ENCODE measurements at regions of chr15 and their contacts with region 1.

Region 1: DNA sequence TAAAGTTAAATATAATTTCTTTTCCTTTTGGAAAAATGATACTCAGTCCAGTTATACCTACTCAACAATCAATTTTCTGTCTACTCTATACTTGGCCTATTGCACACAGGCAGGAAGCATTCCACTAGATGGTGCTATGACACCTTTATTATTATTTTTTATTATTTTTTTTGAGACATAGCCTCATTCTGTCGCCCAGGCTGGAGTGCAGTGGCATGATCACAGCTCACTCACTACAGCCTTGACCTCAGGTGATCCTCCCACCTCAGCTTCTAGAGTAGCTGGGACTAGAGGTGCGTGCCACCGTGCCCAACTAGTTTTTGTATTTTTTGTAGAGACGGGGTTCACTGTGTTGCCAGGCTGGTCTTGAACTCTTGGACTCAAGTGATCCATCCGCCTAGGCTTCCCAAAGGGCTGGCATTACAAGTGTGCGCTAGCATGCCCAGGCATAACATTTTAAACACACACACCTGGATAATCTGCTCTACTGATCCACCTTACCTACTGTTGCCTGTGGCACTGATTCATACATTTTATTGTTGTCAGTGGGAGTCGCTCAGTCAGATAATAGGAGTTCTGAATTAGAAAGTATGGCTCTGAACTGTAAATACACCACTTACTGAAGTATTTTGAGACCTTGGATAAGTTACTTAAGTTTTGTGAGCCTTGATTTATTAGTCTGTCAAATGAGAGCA is 56.2 kb downstream of the EIF3J start:
- DNase-seq: peak in 4 of 5 donors; percentile 58 to 61 (median 60)
- H3K4me3 ChIP-seq: no peak overlapping the region
- H3K4me3 Mint-ChIP-seq: no peak overlapping the region
- H3K27ac ChIP-seq: no peak overlapping the region
- H3K27ac Mint-ChIP-seq: peak overlapping the region in 5 of 7 donors; percentile 62 to 83 (median 78)
- H3K4me1 ChIP-seq: peaks cover 19% of the 10 kb centered on the region
- H3K4me1 Mint-ChIP-seq: peaks cover 8 to 31% (median 17%) of the 10 kb centered on the region in 4 donors
- H3K27me3 ChIP-seq: no peaks in the 10 kb centered on the region
- H3K27me3 Mint-ChIP-seq: no peaks in the 10 kb centered on the region

Region 2: DNA sequence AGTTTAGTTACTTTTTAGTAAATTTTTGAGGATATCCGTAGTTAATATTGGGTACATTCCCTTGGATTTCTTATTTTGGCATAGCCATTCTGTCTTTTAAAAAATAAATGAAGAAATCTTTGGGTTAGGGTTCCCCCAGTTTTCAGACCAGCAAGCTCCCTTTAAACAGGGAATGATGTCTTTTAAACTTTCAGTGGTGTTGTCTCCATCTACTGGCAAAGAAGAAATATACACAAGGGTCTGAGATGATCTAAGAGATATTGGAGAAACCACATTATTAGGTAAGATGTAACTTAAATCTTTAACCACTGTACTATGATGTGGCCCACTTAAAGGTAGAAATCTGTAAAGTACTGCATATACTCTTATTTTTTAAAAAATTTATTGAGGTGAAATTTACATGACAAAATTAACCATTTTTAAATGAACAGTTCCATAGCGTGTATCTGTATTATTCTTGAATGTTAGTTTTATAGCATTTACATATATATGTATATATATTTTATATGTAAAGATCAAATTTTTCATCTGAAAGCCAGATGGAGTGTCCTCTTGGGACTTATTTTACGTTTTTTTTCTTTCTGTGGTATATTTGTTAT is 91.3 kb before region 1 on chr15:
- CTCF ChIA-PET with region 1: no interaction called
- POLR2A ChIA-PET with region 1: no interaction called
- intact Hi-C with region 1: no loop called
- DNase-seq: peak in 4 of 5 donors; percentile 16 to 34 (median 26)
- H3K4me3 ChIP-seq: no peak overlapping the region
- H3K4me3 Mint-ChIP-seq: no peak overlapping the region
- H3K27ac ChIP-seq: no peak overlapping the region
- H3K27ac Mint-ChIP-seq: peak overlapping the region in 1 of 7 donors; percentile 36
- H3K4me1 ChIP-seq: no peaks in the 10 kb centered on the region
- H3K4me1 Mint-ChIP-seq: peaks cover 5 to 7% (median 6%) of the 10 kb centered on the region in 4 donors
- H3K27me3 ChIP-seq: no peaks in the 10 kb centered on the region
- H3K27me3 Mint-ChIP-seq: no peaks in the 10 kb centered on the region

Region 3: GRCh38 chr15:44606740-44607139 is 13.6 kb after region 1 on chr15:
- CTCF ChIA-PET with region 1: interaction called, 12 read pairs
- POLR2A ChIA-PET with region 1: no interaction called
- intact Hi-C with region 1: no loop called
- DNase-seq: no peak
- H3K4me3 ChIP-seq: no peak overlapping the region
- H3K4me3 Mint-ChIP-seq: no peak overlapping the region
- H3K27ac ChIP-seq: no peak overlapping the region
- H3K27ac Mint-ChIP-seq: peak overlapping the region in 2 of 7 donors; percentile 10
- H3K4me1 ChIP-seq: no peaks in the 10 kb centered on the region
- H3K4me1 Mint-ChIP-seq: no peaks in the 10 kb centered on the region
- H3K27me3 ChIP-seq: no peaks in the 10 kb centered on the region
- H3K27me3 Mint-ChIP-seq: no peaks in the 10 kb centered on the region

Region 4: GRCh38 chr15:44782516-44782915 is 189.3 kb after region 1 on chr15:
- CTCF ChIA-PET with region 1: interaction called, 11 read pairs
- POLR2A ChIA-PET with region 1: no interaction called
- intact Hi-C with region 1: no loop called
- DNase-seq: no peak
- H3K4me3 ChIP-seq: no peak overlapping the region
- H3K4me3 Mint-ChIP-seq: no peak overlapping the region
- H3K27ac ChIP-seq: no peak overlapping the region
- H3K27ac Mint-ChIP-seq: peak overlapping the region in 2 of 7 donors; percentile 2 to 38
- H3K4me1 ChIP-seq: peaks cover 7% of the 10 kb centered on the region
- H3K4me1 Mint-ChIP-seq: peaks cover 3 to 9% (median 6%) of the 10 kb centered on the region in 4 donors
- H3K27me3 ChIP-seq: no peaks in the 10 kb centered on the region
- H3K27me3 Mint-ChIP-seq: no peaks in the 10 kb centered on the region

Region 5: DNA sequence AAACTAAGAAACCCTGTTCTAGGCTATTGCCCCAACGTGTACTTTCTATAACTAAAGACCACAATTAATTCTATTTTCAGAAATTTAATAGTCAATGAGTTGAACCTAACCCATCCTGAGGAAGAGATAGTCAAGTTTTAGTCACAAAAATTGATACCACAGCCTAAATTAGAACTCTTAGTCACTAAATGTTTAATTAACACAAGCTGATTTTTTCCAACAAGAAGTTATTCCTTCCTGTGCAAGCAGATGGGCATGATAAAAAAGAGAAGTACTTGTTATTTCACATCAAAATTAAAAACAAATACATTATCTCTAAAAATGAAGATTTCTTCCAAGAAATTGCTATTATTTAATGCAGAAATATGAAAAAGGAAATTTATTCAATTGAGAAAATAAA is 324.9 kb after region 1 on chr15:
- CTCF ChIA-PET with region 1: no interaction called
- POLR2A ChIA-PET with region 1: no interaction called
- intact Hi-C with region 1: loop called (anchors 5 kb)
- DNase-seq: no peak
- H3K4me3 ChIP-seq: no peak overlapping the region
- H3K4me3 Mint-ChIP-seq: no peak overlapping the region
- H3K27ac ChIP-seq: no peak overlapping the region
- H3K27ac Mint-ChIP-seq: no peak overlapping the region
- H3K4me1 ChIP-seq: no peaks in the 10 kb centered on the region
- H3K4me1 Mint-ChIP-seq: no peaks in the 10 kb centered on the region
- H3K27me3 ChIP-seq: no peaks in the 10 kb centered on the region
- H3K27me3 Mint-ChIP-seq: no peaks in the 10 kb centered on the region

Region 6: DNA sequence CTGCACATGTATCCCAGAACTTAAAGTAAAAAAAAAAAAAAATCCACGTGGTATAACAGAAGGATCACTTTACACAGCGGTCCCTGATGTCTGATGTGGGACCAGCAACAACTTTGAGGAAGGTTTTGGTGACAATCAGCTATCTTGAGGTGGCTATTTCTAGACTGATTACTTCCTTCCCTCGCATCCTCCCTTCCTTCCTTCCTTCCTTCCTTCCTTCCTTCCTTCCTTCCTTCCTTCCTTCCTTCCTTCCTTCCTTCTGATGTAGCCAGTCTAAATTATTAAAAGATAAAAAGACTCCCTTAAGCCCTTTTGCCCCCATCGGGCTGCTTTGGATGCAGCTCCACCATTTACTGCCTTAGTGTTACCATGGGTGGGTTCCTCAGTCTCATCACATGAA is 444.7 kb after region 1 on chr15:
- CTCF ChIA-PET with region 1: interaction called, 8 read pairs
- POLR2A ChIA-PET with region 1: no interaction called
- intact Hi-C with region 1: loop called (anchors 2 kb)
- DNase-seq: no peak
- H3K4me3 ChIP-seq: no peak overlapping the region
- H3K4me3 Mint-ChIP-seq: peak overlapping the region in 1 of 8 donors; percentile 26
- H3K27ac ChIP-seq: no peak overlapping the region
- H3K27ac Mint-ChIP-seq: peak overlapping the region in 1 of 7 donors; percentile 4
- H3K4me1 ChIP-seq: peaks cover 5% of the 10 kb centered on the region
- H3K4me1 Mint-ChIP-seq: peaks cover 5 to 19% (median 11%) of the 10 kb centered on the region in 4 donors
- H3K27me3 ChIP-seq: no peaks in the 10 kb centered on the region
- H3K27me3 Mint-ChIP-seq: no peaks in the 10 kb centered on the region

Measured in CD4-positive, alpha-beta memory T cell (primary cell).